HepG2 (cell line): ENCODE measurements at regions of chr7 and their contacts with region 1.

Region 1: GRCh38 chr7:101287032-101287431 is 34.6 kb downstream of the IFT22 start:
- DNase-seq: no peak
- ATAC-seq: no peak
- H3K4me3 ChIP-seq: no peak overlapping the region
- H3K27ac ChIP-seq: no peak overlapping the region
- H3K4me1 ChIP-seq: peaks cover 23% of the 10 kb centered on the region
- H3K27me3 ChIP-seq: peaks cover 0 to 12% of the 10 kb centered on the region in 2 experiments; a peak in 2 of 5 replicates
- CTCF ChIP-seq: no peak
- EP300 ChIP-seq: no peak
- POLR2A ChIP-seq: no peak
- RAD21 ChIP-seq: no peak

Region 2: GRCh38 chr7:99984593-99984992 is 1302.4 kb before region 1 on chr7:
- CTCF ChIA-PET with region 1: no interaction called
- POLR2A ChIA-PET with region 1: interaction called, 4 read pairs
- in situ Hi-C with region 1: loop called (anchors 5 kb)
- intact Hi-C with region 1: no loop called
- DNase-seq: no peak
- ATAC-seq: no peak
- H3K4me3 ChIP-seq: no peak overlapping the region
- H3K27ac ChIP-seq: no peak overlapping the region
- H3K4me1 ChIP-seq: peaks cover 28% of the 10 kb centered on the region
- H3K27me3 ChIP-seq: no peaks in the 10 kb centered on the region
- CTCF ChIP-seq: no peak
- EP300 ChIP-seq: no peak
- POLR2A ChIP-seq: no peak
- RAD21 ChIP-seq: no peak

Region 3: DNA sequence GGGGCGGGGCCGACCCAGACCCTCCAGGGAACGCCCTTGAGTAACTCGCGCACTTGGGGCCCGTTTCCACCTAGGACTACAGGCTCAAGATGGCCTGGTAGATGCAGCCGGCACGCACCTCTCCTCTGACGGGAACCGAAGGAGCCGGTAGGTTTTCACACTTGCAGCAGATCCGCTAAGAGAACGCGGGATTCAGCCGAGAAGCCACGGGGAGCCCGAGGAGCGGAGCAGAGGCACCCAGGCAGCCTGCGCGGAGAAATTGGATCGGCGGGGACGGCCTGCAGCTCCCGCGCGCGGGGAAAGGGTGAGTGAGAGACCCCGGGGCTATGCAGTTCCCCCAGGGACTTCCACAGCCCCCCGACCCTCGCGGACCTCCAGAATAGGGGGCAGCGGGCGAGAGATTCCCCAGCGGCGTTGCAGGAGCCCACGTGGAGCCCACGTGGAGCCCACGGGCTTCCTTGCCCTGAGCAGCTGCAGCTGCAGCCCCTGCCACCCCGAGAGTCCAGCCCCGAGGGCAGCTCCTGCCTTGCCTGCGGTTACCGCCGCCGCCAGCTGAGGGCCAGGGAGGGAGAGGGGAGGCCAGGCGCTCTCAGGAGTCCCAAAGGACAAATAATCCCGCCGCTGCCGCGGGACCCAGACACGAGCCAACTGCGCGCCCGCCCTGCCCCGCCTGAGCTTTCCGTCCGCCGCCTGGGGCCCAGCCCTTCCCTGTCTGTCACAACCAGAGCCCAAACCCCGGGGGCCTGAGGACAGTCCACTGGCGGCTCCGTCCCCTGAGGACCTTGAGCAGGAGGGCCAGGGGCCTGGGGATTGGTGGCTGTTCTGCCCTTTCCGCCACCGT is 21.4 kb after region 1 on chr7:
- CTCF ChIA-PET with region 1: no interaction called
- POLR2A ChIA-PET with region 1: interaction called, 16 read pairs
- in situ Hi-C with region 1: no loop called
- intact Hi-C with region 1: no loop called
- DNase-seq: peak; percentile 73
- ATAC-seq: peak; percentile 93
- H3K4me3 ChIP-seq: peak overlapping the region; percentile 82 to 94 (median 89)
- H3K27ac ChIP-seq: peak overlapping the region; percentile 82
- H3K4me1 ChIP-seq: peaks cover 9% of the 10 kb centered on the region; the same call in 1 of the 2 replicates
- H3K27me3 ChIP-seq: no peaks in the 10 kb centered on the region
- CTCF ChIP-seq: no peak; the same call in 1 of the 2 replicates
- EP300 ChIP-seq: no peak
- POLR2A ChIP-seq: peak; percentile 82 to 85
- RAD21 ChIP-seq: no peak

Region 4: GRCh38 chr7:101465576-101466196 is 178.7 kb after region 1 on chr7:
- CTCF ChIA-PET with region 1: no interaction called
- POLR2A ChIA-PET with region 1: no interaction called
- in situ Hi-C with region 1: no loop called
- intact Hi-C with region 1: no loop called
- DNase-seq: no peak
- ATAC-seq: no peak
- H3K4me3 ChIP-seq: no peak overlapping the region
- H3K27ac ChIP-seq: no peak overlapping the region
- H3K4me1 ChIP-seq: peaks cover 5% of the 10 kb centered on the region
- H3K27me3 ChIP-seq: no peaks in the 10 kb centered on the region; a peak in 1 of 5 replicates
- CTCF ChIP-seq: no peak
- EP300 ChIP-seq: no peak
- POLR2A ChIP-seq: no peak
- RAD21 ChIP-seq: no peak